ENCODE measurements at regions of chr9 and their contacts with region 1.

Region 1: GRCh38 chr9:129336601-129337331 is 158.7 kb upstream of the IER5L start:
- DNase-seq: peak in 8 of 10 donors; percentile 42 to 77 (median 60)
- H3K4me3 ChIP-seq: peak overlapping the region; percentile 14 to 71 (median 51)
- H3K27ac ChIP-seq: peak overlapping the region; percentile 14 to 97 (median 88)
- H3K27me3 ChIP-seq: no peaks in the 10 kb centered on the region
- CTCF ChIP-seq: no peak

Region 2: DNA sequence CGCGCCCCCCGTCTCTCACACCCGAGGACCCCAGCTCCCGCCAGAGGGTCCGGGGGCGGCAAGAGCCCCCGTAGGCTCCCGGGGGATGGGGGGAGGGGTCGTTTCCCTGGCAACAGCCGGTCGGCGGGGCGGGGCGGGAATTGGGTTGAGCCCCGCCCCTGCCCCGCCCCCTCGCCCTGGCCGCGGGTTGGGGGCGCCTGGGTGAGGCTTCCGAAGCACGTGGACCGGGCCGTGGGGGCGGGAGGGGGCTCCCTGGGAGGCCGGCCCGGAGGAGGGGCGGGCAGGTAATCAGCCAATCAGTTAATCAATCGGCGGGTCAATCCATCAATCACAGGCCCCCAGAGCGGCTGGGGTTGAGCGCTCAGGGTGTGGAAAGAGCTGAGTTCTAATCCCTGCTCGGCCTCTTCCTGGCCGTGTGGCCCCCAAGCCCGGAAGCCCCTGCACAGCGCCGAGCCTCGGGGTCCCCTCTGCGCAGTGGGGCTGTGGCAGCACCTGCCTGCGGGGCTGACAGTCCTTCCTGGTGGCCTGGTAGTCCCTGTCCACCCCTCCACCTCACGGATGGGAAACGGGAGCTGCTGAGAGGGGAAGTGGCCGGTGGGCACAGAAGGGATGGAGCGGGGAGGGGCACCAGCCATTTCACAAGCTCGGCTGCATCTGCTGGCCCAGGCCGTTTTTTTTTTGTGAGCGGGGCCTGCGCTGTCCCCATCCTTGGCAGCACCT is 15.5 kb after region 1 on chr9:
- intact Hi-C with region 1: no loop called
- DNase-seq: peak in 1 of 10 donors; percentile 43
- H3K4me3 ChIP-seq: peak overlapping the region in 58 of 59 donors; percentile 17 to 67 (median 49)
- H3K27ac ChIP-seq: peak overlapping the region in 58 of 59 donors; percentile 16 to 91 (median 80)
- H3K27me3 ChIP-seq: peaks cover 0 to 9% (median 0%) of the 10 kb centered on the region in 45 donors
- CTCF ChIP-seq: no peak

Region 3: DNA sequence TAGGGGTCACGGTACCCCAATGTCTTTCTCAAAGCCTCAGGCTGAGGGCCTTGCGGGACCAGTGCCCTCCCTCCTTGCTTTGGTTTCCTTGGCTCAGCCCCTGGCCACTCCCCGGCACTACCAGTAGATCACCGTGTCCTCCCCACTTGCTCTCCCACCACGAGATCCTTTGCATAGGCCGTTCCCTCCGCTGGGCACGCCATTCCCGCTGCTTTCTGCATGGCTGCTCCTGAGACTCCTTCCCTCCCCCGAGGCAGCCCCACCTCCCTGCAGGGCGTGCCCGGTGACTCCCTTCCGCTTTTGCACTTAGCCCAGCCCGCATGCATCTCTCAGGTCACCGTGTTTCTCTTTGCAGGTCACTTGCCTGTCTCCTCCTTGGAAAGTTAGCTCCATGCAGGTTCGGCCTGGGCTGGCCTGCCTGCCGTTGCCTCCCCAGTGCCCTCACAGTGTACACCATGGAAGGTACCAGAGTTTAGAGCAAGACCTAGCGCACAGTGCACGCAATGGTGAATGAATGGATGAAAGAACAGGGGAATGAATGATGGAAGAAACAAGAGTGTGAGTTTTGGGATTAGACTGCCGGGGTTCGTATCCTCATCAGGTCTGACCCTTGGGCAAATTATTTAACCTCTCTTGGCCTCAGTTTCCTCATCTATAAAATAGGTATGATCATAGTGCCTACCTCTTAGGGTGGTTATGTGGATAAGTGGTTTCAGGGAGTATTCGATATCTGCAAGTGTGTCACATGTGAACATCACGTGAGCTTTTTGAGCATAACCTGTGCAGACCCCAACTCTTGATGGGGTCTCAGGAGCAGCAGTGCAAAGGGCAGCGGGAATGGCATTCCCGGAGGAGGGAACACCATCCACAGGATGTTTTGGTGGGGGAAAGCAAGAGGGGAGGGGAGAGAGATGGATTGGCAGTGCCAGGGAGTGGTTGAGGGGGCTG is 69.8 kb after region 1 on chr9:
- intact Hi-C with region 1: loop called in 1 of 2 experiments (anchors 5 kb)
- DNase-seq: no peak
- H3K4me3 ChIP-seq: no peak overlapping the region
- H3K27ac ChIP-seq: peak overlapping the region in 13 of 59 donors; percentile 8 to 94 (median 67)
- H3K27me3 ChIP-seq: no peaks in the 10 kb centered on the region
- CTCF ChIP-seq: no peak

Measured in dorsolateral prefrontal cortex (tissue), 120 donors.